Mucosa of descending colon (tissue), 3 donors: ENCODE measurements at regions of chr14 and their contacts with region 1.

Region 1: DNA sequence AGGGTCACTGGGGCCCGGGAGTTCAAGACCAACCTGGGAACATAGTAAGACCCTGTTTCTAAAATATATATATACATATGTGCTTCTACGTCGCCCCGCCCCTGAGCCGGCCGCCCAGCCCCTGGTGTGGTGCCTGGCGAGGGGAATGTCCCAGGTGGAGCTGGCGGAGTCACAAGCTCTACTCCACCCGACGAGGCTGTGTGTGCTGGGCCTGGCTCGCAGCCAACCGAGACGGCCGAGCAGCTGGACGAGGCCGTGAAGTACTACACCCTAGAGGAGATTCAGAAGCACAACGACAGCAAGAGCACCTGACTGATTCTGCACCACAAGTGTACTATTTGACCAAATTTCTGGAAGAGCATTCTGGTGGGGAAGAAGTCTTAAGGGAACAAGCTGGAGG is 22.1 kb upstream of the ITPK1 start:
- DNase-seq: peak; percentile 86 to 92 (median 91)
- ATAC-seq: peak; percentile 95
- H3K4me3 ChIP-seq: no peak overlapping the region
- H3K4me1 ChIP-seq: peaks cover 13% of the 10 kb centered on the region
- CTCF ChIP-seq: no peak

Region 2: DNA sequence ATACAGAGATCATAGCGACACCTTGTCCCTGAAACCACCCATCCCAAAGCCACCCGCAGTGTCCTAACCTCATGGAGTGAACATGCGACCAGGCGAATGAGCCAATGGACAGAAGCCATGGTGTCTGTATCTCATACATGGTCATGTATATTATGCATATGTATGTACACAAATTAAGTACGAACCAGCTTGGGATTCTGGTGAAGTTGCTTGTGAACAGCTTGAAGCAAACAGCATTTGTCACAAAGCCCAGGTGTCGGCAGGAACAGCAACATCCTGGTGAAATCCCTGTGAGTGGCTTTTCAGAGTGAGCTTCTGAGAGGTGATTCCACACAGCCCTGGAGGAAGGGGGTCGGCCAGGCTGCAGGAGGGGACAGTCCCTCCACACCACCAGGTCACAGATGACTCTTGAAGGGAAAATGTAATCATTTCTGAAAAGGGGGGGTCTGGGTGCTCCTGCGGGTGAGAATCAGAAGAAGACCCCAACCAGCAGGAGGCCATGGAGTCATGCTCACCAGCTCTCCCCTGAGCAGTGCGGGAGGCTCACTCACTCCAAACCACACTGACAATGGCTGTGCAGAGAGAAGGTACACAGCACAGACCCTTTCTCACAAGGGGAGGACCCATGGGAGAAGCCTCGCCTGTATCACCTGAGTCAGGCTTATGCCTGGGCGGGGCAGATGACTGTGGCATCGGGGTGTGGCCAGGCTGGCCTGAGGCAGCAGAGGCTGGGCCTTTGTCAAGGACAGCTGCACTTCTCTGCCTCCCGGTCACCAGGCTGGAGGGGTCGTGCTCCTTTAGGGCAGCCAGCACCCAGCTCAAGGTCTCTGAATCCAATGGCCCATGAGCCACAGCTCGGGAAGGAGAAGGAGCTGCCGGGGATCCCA is 200.6 kb before region 1 on chr14:
- intact Hi-C with region 1: no loop called
- DNase-seq: peak; percentile 43 to 58 (median 50)
- ATAC-seq: peak; percentile 68
- H3K4me3 ChIP-seq: no peak overlapping the region
- H3K4me1 ChIP-seq: no peaks in the 10 kb centered on the region
- CTCF ChIP-seq: no peak

Region 3: DNA sequence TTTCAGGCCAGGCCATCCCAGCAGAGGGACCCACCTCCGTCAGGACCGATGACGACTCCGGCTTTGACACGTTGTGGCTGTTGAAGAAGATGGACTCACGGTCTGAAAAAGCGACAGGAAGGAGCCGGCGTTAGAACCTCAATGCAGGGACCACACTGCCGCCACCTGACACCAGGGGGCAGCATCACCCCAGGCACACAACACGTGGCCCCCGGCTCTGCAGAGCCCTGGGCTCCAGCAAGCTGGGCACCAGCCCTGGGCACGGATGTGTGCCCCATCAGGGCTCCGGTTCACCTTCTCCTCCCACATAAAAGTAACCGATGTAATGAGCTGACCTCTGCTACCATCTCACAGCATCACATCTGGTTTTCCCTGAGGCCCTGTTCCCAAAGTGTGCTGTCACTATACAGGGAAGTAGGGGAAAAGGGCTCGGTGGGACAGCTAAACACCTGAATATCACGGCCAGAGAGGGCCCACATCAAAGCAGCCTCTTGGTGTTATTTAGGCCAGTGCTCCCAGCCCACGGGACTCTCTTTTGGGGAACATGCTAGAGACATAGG is 185.9 kb before region 1 on chr14:
- intact Hi-C with region 1: loop called (anchors 5 to 10 kb)
- DNase-seq: peak; percentile 76 to 91 (median 88)
- ATAC-seq: peak; percentile 93
- H3K4me3 ChIP-seq: no peak overlapping the region
- H3K4me1 ChIP-seq: no peaks in the 10 kb centered on the region
- CTCF ChIP-seq: peak; percentile 94

Region 4: DNA sequence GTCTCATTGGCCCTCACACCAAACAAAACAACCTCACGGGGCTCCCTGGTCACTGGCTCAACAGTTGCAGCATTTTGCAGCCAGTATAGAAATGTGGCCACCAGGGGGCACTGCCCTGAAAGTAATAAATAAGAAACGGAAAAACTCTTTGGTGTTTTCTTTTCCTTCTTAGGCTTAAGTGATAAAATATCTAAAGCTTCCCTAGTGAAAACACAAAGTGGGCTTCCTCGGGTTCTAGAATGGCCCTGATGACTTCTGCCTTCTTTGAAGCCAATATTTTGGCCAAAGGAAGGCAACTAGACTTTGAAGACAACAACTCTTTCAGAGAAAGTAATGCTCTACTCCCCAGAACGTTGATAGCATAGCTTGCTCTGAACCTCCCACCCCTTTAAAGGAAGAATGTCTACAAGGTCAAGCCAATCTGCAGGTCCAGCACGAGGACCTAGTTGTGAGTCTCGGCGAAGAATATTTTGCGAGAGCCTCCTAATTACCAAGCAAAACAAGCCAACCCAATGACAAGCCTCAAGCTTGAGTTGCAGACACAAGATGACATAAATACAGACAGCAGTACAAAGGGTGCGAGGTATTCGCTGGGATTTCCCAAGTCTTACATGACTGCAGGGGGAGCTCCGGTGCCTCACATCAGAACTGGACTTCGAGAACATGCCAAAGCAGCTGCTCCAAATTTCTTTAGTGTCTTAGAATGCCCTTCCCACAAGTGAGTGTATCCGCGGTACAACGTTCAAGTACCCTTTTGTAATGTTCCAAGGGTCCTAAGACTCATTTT is 24.8 kb before region 1 on chr14:
- intact Hi-C with region 1: loop called in 1 of 2 experiments (anchors 2 kb)
- DNase-seq: peak in 2 of 3 donors; percentile 80 to 98
- ATAC-seq: peak; percentile 46
- H3K4me3 ChIP-seq: no peak overlapping the region
- H3K4me1 ChIP-seq: peaks cover 17% of the 10 kb centered on the region
- CTCF ChIP-seq: peak; percentile 55